ENCODE measurements at regions of chr2 and their contacts with region 1.

Region 1: GRCh38 chr2:113922784-113923183 is 32.9 kb downstream of the ACTR3 start:
- DNase-seq: no peak
- H3K4me3 Mint-ChIP-seq: no peak overlapping the region
- H3K27ac Mint-ChIP-seq: no peak overlapping the region
- H3K4me1 Mint-ChIP-seq: peaks cover 25% of the 10 kb centered on the region
- H3K27me3 Mint-ChIP-seq: no peaks in the 10 kb centered on the region

Region 2: DNA sequence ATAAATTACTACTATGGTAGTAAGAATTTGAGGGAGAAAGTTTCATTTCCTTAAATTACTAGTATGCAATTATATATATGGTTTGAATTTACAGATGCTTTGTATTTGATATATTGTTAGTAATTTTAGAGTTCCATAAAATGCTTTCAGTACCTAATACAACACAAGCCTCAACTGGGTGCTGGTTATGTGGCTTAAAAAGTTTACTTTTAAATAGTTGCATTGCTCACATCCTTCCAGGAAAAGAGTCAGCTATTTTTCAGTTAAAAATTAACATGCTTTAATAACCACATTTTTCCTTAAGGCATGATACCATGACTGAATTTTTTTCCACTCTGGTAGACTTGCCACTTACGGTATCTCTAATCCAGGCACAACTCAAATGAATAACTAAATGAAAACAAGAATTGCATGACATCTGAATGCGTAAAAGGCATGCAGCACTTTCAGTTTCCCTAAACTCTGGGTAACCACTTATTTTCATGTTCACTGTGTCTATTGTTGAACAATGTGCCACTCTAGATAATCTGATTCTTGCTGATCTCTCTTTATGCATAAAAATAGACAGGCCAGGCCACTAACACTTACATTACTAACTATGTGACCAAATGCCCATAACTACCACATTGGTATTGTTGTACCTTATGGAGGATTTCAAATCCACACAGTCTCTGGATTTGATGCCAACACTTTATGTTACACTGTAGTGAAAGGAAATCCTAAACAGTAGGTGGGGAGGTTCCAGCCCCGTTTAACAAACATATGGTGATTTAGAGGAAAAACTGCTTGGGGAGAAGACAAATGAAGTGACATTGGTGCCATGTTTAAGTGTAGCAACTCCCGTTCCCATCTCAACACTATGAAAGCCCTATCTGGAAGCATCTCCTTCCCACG is 130.8 kb before region 1 on chr2:
- CTCF ChIA-PET with region 1: no interaction called
- intact Hi-C with region 1: loop called (anchors 1 kb)
- DNase-seq: peak; percentile 59
- H3K4me3 Mint-ChIP-seq: peak overlapping the region; percentile 26
- H3K27ac Mint-ChIP-seq: peak overlapping the region; percentile 94
- H3K4me1 Mint-ChIP-seq: peaks cover 36% of the 10 kb centered on the region
- H3K27me3 Mint-ChIP-seq: no peaks in the 10 kb centered on the region

Region 3: GRCh38 chr2:113910110-113910717 is 12.6 kb before region 1 on chr2:
- CTCF ChIA-PET with region 1: no interaction called
- intact Hi-C with region 1: loop called (anchors 1 kb)
- DNase-seq: peak; percentile 85
- H3K4me3 Mint-ChIP-seq: no peak overlapping the region
- H3K27ac Mint-ChIP-seq: peak overlapping the region; percentile 84
- H3K4me1 Mint-ChIP-seq: peaks cover 73% of the 10 kb centered on the region
- H3K27me3 Mint-ChIP-seq: no peaks in the 10 kb centered on the region

Region 4: GRCh38 chr2:113940891-113941290 is 18.1 kb after region 1 on chr2:
- CTCF ChIA-PET with region 1: no interaction called
- intact Hi-C with region 1: loop called (anchors 2 kb)
- DNase-seq: no peak
- H3K4me3 Mint-ChIP-seq: no peak overlapping the region
- H3K27ac Mint-ChIP-seq: no peak overlapping the region
- H3K4me1 Mint-ChIP-seq: peaks cover 3% of the 10 kb centered on the region
- H3K27me3 Mint-ChIP-seq: no peaks in the 10 kb centered on the region

Region 5: GRCh38 chr2:113977660-113978523 is 55.1 kb after region 1 on chr2:
- CTCF ChIA-PET with region 1: no interaction called
- intact Hi-C with region 1: no loop called
- DNase-seq: no peak
- H3K4me3 Mint-ChIP-seq: no peak overlapping the region
- H3K27ac Mint-ChIP-seq: no peak overlapping the region
- H3K4me1 Mint-ChIP-seq: no peaks in the 10 kb centered on the region
- H3K27me3 Mint-ChIP-seq: no peaks in the 10 kb centered on the region

Measured in activated naive CD4-positive, alpha-beta T cell treated with anti-CD3 and anti-CD28 coated beads for 36 hours (primary cell).